HEK293 (cell line): ENCODE measurements at regions of chr2 and their contacts with region 1.

Region 1: DNA sequence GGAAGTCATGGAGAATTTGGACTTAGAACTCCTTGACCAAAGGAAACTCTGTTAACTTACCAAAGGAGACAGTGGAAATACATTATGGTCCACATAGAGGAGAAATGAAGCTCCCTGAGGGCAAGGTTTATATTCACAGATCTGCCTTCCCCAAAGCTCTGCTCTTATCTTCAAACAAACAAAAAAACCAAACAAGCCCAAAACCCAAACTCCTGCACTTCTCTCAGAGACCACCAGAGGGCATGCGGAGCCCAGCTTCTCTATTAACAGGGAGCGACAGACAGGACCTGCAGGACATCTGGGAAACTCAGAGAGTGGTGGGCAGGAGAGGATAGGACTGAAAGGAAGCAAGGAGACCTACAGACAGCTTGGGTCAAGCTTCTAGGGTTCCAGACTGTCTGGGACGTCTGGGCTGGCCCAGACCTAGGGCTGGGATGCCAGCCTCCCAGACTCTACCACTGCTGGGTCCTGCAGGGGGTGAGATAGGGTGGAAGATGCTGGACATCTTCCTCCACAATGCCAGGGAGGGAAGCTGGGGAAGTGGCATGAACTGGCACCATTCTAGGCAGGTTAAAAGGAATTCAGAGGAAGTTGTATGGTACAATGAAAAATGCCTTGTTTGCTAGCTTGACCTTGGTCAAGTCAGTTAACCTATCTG is 4.0 kb upstream of the WNT10A start:
- H3K4me3 ChIP-seq: no peak overlapping the region
- H3K27ac ChIP-seq: no peak overlapping the region
- H3K4me1 ChIP-seq: no peaks in the 10 kb centered on the region
- CTCF ChIP-seq: peak; percentile 84

Region 2: GRCh38 chr2:218536804-218537494 is 339.7 kb before region 1 on chr2:
- CTCF ChIA-PET with region 1: no interaction called
- POLR2A ChIA-PET with region 1: no interaction called
- H3K4me3 ChIP-seq: no peak overlapping the region
- H3K27ac ChIP-seq: no peak overlapping the region
- H3K4me1 ChIP-seq: no peaks in the 10 kb centered on the region
- CTCF ChIP-seq: no peak

Region 3: GRCh38 chr2:218860950-218861381 is 15.7 kb before region 1 on chr2:
- CTCF ChIA-PET with region 1: interaction called, 71 read pairs
- POLR2A ChIA-PET with region 1: interaction called, 3 read pairs
- H3K4me3 ChIP-seq: no peak overlapping the region
- H3K27ac ChIP-seq: no peak overlapping the region
- H3K4me1 ChIP-seq: peaks cover 16% of the 10 kb centered on the region
- CTCF ChIP-seq: no peak

Region 4: DNA sequence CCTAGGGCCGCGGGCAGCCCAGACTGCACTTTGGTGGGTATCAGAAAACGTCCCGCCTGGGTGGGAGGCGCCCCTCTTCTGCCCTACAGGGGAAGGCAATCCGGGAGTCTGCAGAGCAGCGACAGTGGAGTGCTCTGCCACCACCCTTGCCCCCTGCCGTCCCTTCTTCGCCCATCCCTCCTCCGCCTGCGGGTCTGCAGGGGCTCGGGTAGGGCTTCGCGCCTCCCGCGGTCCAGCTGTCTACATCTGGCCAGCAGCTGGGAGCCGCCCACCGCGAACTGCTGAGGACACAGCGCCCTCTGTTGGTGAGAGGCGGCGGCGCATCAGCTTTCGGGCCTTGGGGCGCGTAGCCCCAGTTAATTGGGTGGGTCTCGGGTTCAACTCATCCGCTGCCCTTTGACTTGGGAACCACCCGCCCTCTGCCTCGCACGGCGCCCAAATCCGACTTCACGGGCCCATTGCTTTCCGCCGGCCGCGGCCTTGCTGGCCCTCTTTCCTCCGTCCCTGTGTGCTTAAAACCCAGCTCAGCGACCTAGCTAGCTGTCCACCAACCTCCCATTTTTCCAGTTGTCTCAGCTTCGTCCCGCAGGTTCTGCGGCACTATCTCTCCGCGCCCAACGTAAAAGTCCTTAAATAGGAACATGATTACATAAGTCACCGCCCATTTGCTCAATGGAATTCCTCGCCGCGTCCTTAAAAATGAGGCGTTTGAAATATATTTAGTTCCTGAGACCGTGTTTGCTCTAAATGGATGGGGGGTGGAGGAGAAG is 21.6 kb after region 1 on chr2:
- CTCF ChIA-PET with region 1: interaction called, 552 read pairs
- POLR2A ChIA-PET with region 1: interaction called, 19 read pairs
- H3K4me3 ChIP-seq: peak overlapping the region; percentile 10
- H3K27ac ChIP-seq: no peak overlapping the region
- H3K4me1 ChIP-seq: no peaks in the 10 kb centered on the region; the same call in 1 of the 2 replicates
- CTCF ChIP-seq: peak; percentile 98

Region 5: GRCh38 chr2:218979846-218980734 is 103.4 kb after region 1 on chr2:
- CTCF ChIA-PET with region 1: interaction called, 18 read pairs
- POLR2A ChIA-PET with region 1: no interaction called
- H3K4me3 ChIP-seq: peak overlapping the region; percentile 42
- H3K27ac ChIP-seq: no peak overlapping the region; the same call in 1 of the 2 replicates
- H3K4me1 ChIP-seq: 0 out of 2 replicates have a peak, but pooled peaks cover 2% of the 10 kb centered on the region
- CTCF ChIP-seq: peak; percentile 99

Region 6: DNA sequence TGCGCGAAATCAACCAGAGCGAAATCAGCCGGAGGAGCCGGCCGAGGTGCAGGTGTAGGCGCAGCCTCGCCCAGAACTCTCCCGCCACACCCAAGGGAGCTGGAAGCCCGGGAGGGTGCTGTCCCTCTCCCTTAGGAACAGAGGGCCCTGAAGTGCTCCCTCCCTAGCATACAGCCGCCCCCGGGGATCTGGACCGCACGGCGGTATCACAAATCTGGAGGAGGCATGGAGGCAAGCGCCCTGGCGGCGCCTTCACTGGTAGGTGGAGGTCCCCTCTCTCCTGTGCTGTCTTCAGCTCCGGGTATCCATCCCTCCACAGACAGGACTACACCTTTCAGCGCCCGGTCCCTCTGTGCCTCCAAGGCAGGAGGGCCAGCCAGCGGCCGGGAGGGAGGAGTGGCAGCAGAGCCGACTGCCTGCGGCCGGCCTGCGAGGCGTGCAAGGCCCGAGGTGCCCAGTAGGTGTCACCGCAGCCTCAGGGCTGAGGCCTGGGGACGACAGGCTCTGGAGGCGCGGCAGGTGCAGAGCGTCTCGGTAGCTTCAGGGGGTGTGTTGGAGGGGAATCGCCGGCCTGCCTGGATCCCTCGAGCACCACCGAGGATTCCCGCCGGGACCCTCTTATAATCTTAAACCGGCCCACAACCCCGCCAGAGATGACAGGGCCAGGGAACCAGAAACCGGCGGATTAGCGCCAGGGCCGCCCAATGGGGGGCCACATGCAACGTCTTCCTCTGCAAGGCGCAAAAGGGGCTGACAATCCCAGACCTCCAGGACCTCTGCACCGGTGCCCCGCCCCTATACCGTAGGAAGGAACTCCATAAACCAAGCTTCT is 181.2 kb after region 1 on chr2:
- CTCF ChIA-PET with region 1: interaction called, 12 read pairs
- POLR2A ChIA-PET with region 1: no interaction called
- H3K4me3 ChIP-seq: no peak overlapping the region
- H3K27ac ChIP-seq: no peak overlapping the region
- H3K4me1 ChIP-seq: no peaks in the 10 kb centered on the region; the same call in 1 of the 2 replicates
- CTCF ChIP-seq: peak; percentile 93